ENCODE measurements at regions of chr3 and their contacts with region 1.

Region 1: GRCh38 chr3:109081746-109082510 is 36.0 kb downstream of the MORC1 start:
- DNase-seq: peak; percentile 48
- H3K4me3 Mint-ChIP-seq: no peak overlapping the region
- H3K27ac Mint-ChIP-seq: no peak overlapping the region
- H3K4me1 Mint-ChIP-seq: no peaks in the 10 kb centered on the region
- H3K27me3 Mint-ChIP-seq: peaks cover 10% of the 10 kb centered on the region

Region 2: DNA sequence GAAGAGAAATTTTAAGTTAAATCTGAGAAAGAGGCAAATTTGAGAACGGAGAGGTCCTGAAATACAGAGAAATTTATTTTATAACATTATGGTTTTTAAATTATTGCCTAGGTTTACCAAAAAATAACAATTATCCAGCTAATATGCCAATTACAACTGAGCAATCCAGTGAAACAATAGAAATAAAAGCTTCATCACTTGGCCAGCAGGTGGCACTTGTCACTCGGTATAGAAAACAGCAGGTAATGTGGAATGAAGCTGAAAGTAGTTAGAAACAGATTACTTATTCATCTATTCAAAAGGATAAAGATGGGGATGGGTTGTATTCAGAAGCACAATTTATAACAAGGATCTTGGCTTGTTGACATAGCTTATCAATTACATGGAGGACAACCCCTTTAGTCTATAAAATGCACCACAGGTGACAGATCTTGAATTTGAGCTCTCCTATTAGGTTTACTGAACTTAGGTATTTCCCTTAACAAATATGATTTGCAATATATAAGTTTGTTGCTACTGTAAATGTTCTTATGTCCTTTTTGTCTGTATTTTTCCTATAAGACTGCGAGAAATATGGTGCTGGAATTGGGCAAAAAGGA is 58.2 kb before region 1 on chr3:
- CTCF ChIA-PET with region 1: interaction called, 30 read pairs
- DNase-seq: peak; percentile 58
- H3K4me3 Mint-ChIP-seq: no peak overlapping the region
- H3K27ac Mint-ChIP-seq: no peak overlapping the region
- H3K4me1 Mint-ChIP-seq: no peaks in the 10 kb centered on the region
- H3K27me3 Mint-ChIP-seq: peaks cover 5% of the 10 kb centered on the region